ENCODE measurements at regions of chr12 and their contacts with region 1.

Region 1: GRCh38 chr12:50074936-50075807 is 10.0 kb upstream of the SMARCD1 start:
- DNase-seq: peak; percentile 83
- H3K4me3 ChIP-seq: no peak overlapping the region
- H3K27ac ChIP-seq: no peak overlapping the region
- H3K4me1 ChIP-seq: peaks cover 9% of the 10 kb centered on the region
- H3K27me3 ChIP-seq: no peaks in the 10 kb centered on the region
- CTCF ChIP-seq: peak; percentile 98

Region 2: GRCh38 chr12:50174971-50175715 is 100.0 kb after region 1 on chr12:
- intact Hi-C with region 1: loop called (anchors 5 kb)
- DNase-seq: no peak
- H3K4me3 ChIP-seq: no peak overlapping the region
- H3K27ac ChIP-seq: no peak overlapping the region
- H3K4me1 ChIP-seq: no peaks in the 10 kb centered on the region
- H3K27me3 ChIP-seq: no peaks in the 10 kb centered on the region
- CTCF ChIP-seq: peak; percentile 75

Region 3: GRCh38 chr12:50326636-50327284 is 251.6 kb after region 1 on chr12:
- intact Hi-C with region 1: no loop called
- DNase-seq: no peak
- H3K4me3 ChIP-seq: no peak overlapping the region
- H3K27ac ChIP-seq: no peak overlapping the region
- H3K4me1 ChIP-seq: peaks cover 6% of the 10 kb centered on the region
- H3K27me3 ChIP-seq: no peaks in the 10 kb centered on the region
- CTCF ChIP-seq: no peak

Measured in left ventricle myocardium inferior (tissue), 1 donor.